ENCODE measurements at regions of chr14 and their contacts with region 1.

Region 1: DNA sequence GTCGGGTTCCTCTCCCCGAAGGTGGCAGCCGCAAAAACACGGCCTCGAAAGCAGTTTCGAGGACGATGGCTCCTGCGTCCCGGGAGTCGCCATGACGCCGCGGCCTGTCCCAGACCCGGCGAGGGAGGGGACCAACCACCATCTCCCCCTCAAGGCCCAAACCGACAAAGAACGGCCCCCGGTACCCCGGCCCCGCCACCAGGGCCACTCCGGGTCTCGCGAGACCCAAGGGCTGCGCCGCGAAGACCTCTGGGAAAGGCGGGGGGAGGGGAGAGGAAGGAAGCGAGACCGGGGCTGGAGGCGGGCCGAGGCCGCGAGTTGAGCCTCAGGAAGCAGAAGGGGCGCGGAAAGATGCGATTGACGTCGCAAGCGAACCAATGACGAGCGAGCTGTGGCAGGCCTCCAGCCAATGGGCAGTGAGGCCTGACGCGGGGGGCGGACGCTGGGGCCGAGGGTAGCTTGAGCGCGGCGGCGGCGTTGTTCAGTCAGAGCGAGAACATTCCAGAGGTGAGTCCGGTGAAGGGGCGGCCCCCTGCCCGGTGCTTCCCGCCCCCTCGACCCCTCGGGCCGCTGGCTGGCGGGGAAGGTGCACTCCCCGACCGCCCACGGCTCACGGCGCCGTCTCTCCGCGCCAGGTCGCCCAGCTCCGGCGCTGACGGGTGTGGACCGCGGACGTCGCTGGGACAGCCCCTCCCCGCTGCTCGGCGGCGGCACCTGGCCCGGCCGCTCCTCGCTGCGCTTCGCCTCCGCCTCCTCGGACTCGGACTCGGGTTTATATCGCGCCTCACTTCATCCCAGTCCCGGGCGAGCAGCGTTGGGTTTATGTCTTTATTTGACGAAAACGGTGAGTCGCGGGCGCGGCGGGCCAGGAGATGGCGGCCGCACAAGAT is at the start of gene EIF5:
- DNase-seq: peak; percentile 99
- H3K4me3 ChIP-seq: peak within 1 kb of the TSS; percentile 99
- H3K27ac ChIP-seq: peak within 1 kb of the TSS; percentile 83
- H3K4me1 ChIP-seq: peaks cover 43% of the 10 kb centered on the region
- CTCF ChIP-seq: no peak
- total RNA-seq, gene EIF5: 171 and 237 TPM in 2 replicates

Region 2: DNA sequence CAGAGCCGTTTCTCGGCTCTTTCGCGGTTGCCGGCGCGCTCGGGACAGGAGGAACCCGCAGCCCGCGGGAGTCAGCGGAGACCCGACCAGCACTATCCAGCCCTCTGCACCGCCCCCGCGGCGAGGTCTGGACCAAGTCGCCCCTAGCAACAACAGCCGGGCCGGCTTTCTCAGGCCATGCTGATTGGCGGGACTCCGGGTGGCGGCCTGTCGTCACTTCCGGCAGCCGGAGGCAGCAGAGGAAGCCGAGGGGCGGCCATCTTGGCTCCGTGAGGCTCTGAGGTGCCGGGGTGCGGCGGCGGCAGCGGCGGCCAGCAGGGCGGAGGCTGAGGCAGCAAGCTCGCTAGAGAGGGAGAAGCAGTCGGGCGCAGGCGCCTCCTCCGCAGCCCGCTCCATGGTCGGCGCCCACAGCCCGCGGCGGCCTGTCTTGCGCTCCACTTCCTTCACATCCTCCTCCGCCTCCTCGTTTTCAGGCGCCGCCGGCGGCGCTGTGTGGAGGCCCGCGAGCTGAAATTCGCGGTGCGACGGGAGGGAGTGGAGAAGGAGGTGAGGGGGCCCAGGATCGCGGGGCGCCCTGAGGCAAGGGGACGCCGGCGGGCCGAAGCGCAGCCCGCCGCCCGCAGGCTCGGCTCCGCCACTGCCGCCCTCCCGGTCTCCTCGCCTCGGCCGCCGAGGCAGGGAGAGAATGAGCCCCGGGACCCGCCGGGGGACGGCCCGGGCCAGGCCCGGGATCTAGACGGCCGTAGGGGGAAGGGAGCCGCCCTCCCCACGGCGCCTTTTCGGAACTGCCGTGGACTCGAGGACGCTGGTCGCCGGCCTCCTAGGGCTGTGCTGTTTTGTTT is 51.4 kb after region 1 on chr14 and contains the start of gene MARK3:
- CTCF ChIA-PET with region 1: no interaction called
- POLR2A ChIA-PET with region 1: interaction called, 4 read pairs
- intact Hi-C with region 1: loop called (anchors 1 kb)
- DNase-seq: peak; percentile 98
- H3K4me3 ChIP-seq: peak within 1 kb of the TSS; percentile 96
- H3K27ac ChIP-seq: peak within 1 kb of the TSS; percentile 89
- H3K4me1 ChIP-seq: peaks cover 22% of the 10 kb centered on the region
- CTCF ChIP-seq: peak; percentile 50; the same call in 1 of the 2 replicates
- total RNA-seq, gene MARK3: 70.8 and 72.7 TPM in 2 replicates

Region 3: DNA sequence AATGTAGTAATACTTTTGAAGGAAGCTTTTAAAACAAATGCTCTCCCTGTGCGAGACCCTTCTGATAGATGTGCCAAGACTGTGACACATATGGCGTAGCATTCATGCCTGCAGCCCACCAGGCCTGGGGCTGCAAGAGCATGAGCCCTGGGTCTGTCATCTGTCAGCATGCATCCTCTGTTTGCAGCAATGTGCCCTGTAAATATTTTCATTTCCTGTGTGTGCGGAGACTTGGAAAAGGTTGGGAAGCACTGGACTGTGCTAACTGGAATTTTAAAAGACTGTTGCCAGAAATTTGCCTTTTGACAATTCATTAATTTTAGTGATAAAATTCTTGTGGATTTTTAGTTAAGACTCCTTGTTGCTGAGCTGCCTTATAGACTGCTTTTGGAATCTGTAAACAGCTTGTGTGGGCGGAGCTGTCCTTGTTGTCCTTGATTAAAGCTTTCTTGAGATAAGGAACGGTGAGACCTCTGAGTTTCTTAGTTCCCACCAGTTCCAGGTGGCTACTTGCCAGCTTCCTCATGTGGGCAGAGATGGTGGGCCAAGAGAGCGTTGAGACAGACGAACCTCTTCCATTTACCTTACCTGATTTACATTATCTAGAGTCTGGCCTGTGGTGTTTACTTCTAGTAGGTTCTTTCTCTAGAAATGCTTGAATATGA is 74.6 kb after region 1 on chr14:
- CTCF ChIA-PET with region 1: no interaction called
- POLR2A ChIA-PET with region 1: no interaction called
- intact Hi-C with region 1: no loop called
- DNase-seq: no peak
- H3K4me3 ChIP-seq: no peak overlapping the region
- H3K27ac ChIP-seq: no peak overlapping the region
- H3K4me1 ChIP-seq: peaks cover 8% of the 10 kb centered on the region
- CTCF ChIP-seq: no peak